A673 (cell line): ENCODE measurements at regions of chr10 and their contacts with region 1.

Region 1: DNA sequence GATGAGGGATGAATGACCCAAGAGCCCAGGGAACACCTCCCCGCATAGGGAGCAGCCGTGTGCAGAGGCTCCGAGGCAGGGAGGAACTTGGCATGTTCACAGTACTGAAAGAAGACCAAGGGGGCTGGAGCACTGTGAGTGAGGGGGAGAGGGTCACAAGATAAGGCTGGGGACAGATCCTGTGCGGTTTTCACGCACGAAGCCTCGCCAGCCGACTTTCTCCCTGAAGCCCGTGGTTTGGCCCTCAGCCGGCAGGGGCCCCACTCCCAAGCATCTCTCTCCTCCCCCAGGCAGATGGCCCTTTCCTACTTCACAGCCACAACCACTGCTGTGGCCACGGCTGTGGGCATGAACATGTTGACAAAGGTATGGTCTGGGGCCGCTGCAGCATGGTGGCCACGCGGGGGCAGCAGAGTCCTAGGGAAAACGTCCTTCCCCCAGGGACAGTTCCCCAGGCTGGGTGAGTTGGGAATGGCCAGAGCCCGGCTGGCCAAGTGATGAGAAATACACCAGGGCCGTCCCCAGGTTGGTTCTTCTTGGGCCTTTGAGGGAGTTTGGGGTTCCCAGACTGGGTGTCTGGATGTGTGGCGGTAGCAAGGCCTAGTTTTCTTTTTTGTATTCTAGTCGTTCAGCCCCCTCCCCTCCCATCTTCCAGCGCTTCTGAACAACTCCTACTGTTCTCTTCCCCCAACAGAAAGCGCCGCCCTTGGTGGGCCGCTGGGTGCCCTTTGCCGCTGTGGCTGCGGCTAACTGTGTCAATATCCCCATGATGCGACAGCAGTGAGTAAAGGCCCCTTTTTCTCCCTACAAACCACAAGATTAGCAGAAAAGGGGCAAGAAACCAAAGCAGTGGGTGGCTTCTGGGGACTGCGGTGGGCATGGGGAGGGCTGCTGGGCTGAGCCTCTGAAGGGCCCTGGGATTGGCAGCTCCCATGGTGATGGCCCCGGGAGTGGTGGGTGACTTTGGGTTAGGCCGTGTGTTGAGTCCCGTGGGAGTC is 14.4 kb upstream of the WBP1L start:
- DNase-seq: peak; percentile 78
- H3K4me3 ChIP-seq: no peak overlapping the region
- H3K27ac ChIP-seq: no peak overlapping the region
- H3K4me1 ChIP-seq: no peaks in the 10 kb centered on the region
- H3K27me3 ChIP-seq: no peaks in the 10 kb centered on the region
- CTCF ChIP-seq: peak; percentile 94

Region 2: DNA sequence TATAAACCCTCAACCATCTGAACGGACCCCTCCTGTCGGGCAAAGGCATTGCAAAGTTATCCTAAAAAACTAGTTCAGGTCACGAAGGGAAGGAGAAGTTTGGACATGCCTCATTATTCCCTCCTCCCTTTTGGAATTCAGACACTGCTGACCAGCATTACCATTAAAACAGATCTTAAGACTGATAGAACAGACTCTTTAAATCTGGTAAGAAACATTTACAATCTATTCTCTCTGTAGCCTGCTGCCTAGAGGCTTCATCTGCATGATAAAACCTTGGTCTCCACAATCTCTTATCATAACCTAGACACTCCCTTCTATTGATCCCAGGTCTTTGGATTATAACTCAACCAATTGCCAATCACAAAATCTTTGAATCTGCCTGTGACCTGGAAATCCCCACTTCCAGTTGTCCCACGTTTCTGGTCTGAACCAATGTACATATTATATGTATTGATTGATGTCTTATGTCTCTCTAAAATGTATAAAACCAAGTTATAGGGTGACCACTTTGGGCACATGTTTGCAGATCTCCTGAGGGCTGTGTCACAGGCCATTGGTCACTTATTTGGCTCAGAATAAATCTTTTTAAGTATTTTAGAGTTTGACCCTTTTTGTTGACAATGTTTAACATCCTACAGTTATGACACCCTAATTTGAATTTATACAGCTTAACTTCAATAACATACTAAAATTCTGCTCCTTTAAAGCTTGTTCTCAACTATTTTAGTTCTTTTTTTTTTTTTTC is 165.3 kb after region 1 on chr10:
- CTCF ChIA-PET with region 1: no interaction called
- POLR2A ChIA-PET with region 1: no interaction called
- intact Hi-C with region 1: no loop called
- DNase-seq: no peak
- H3K4me3 ChIP-seq: no peak overlapping the region
- H3K27ac ChIP-seq: no peak overlapping the region
- H3K4me1 ChIP-seq: no peaks in the 10 kb centered on the region
- H3K27me3 ChIP-seq: no peaks in the 10 kb centered on the region
- CTCF ChIP-seq: no peak

Region 3: DNA sequence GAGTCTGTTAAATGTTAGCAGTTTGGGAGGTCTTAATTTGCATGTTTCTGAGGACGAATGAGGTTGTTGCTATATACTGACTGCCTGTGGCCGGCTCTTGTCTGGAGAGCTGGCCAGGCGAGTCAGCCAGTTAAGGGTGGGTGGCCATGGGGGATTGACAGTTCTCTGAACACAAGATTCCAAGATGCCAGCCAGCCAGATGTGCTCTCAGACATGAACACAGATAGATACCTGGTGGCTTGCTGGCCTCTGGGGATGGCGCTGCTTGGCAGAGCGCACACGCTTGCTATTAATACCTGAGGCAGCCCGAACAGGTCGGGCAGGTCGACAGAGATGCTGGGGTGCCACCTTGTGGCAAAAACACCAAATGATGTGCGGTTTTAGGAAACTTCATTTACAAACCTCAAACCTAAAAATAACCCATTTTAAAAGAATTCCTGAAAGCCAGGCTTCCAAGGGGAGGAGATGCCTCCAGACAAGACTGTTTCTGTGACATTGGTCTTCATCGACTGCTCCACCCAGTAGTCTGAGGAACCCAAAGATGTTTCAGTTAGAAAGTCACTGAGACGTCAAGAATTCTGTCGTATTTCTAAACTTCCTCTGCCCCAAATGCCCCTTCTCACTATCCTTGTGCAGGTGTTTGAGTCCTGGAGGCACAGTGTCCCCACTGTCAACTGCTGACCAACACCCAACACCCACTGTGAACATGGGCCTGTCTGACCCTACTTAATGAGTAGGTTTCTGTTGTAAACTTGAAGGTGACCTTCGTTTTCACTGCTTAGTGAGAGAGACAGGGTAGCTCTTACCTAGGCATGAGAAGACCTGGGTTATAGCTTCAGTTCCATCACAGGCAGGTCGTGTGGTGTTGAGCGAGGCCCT is 340.4 kb after region 1 on chr10:
- CTCF ChIA-PET with region 1: no interaction called
- POLR2A ChIA-PET with region 1: no interaction called
- intact Hi-C with region 1: loop called (anchors 10 kb)
- DNase-seq: peak; percentile 56
- H3K4me3 ChIP-seq: no peak overlapping the region
- H3K27ac ChIP-seq: no peak overlapping the region
- H3K4me1 ChIP-seq: no peaks in the 10 kb centered on the region
- H3K27me3 ChIP-seq: no peaks in the 10 kb centered on the region
- CTCF ChIP-seq: peak; percentile 73